Dorsolateral prefrontal cortex (tissue), 120 donors: ENCODE measurements at regions of chr15 and their contacts with region 1.

Region 1: DNA sequence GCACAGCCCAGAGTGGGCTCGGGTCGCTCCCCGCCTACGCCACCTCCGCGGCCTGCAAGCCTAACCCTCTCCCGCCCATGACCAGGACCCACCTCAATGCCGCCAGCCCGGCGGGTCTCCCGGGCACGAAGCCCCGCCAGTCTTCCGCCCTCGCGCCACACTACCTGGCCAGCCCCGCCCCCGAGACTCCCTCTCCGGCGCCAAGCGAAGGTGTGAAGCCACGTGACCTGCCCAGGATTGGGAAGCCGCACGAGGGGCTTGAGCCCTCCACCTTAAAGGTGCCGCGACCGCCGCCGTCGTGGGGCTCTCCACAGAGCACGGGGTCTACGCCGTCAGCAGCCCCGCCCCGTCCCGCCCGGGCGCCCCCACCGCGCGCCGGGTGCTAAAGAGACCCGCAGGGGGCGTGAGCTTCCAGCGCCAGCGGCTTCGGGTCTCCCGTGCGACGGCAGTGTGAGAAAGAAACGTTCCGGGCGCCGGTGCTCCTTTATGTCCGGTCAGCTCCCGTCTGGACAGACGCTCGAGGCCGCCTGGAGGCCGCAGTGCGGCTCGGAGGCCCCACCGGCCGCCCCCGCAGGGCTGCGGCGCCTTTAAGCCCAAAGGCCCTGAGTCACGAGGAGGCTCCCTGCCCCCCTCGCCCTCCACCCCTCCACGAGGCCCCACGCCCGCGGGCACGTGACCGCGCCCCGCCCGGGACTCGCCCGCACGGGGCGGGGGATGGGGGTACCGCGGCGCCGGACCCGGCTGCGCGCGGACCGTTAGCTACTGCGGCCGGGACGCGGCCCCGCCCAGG is at the start of gene CPEB1:
- DNase-seq: peak; percentile 24 to 84 (median 76)
- H3K4me3 ChIP-seq: peak within 1 kb of the TSS; percentile 42 to 88 (median 75)
- H3K27ac ChIP-seq: peak within 1 kb of the TSS; percentile 67 to 98 (median 92)
- H3K27me3 ChIP-seq: peaks cover 0 to 5% (median 0%) of the 10 kb centered on the region in 45 donors
- CTCF ChIP-seq: peak in 48 of 56 donors; percentile 9 to 62 (median 41)
- total RNA-seq, gene CPEB1: 36.0 to 80.0 (median 62.0) TPM

Region 2: GRCh38 chr15:82571722-82572222 is 75.5 kb before region 1 on chr15:
- intact Hi-C with region 1: loop called (anchors 2 to 5 kb)
- DNase-seq: peak; percentile 68 to 93 (median 88)
- H3K4me3 ChIP-seq: peak overlapping the region; percentile 38 to 78 (median 62)
- H3K27ac ChIP-seq: peak overlapping the region; percentile 67 to 95 (median 89)
- H3K27me3 ChIP-seq: no peaks in the 10 kb centered on the region
- CTCF ChIP-seq: peak in 10 of 56 donors; percentile 8 to 34 (median 18)

Region 3: DNA sequence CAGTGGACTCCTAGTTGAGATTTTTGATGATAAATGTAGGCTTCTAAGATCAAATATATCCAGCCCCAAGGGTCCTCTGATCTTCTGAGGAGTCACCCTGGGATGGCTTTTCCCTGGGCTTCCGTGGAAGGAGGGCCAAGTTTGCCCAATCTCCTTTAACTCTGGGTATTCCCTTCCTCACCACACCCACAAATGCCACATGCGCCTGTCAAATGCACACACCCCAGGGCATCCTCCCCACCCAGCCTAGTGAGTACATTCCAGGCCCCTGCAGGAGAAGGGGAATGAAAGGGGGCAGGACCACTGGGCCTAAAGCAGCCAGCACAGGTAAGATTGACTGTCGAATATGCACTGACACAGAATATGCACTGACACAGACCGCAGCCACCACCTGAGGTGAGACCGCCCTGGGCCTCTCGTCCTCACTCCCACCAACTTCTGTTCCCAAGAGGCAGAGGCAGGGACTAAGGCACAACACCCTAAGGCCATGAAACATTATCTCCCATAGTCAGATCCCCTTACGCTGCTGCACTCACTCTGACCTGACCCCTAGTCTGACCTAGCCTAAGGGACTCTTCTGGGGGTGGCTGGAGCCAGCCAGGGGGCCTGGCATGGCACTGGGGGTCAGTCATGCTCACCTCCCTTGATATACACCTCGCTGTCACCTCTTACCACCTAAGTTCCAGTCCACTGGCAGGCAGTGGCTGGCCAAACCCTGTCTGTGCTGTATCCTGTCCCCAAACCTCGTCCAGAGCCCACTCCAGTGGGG is 51.5 kb after region 1 on chr15:
- intact Hi-C with region 1: no loop called
- DNase-seq: no peak
- H3K4me3 ChIP-seq: no peak overlapping the region
- H3K27ac ChIP-seq: no peak overlapping the region
- H3K27me3 ChIP-seq: no peaks in the 10 kb centered on the region
- CTCF ChIP-seq: no peak

Region 4: DNA sequence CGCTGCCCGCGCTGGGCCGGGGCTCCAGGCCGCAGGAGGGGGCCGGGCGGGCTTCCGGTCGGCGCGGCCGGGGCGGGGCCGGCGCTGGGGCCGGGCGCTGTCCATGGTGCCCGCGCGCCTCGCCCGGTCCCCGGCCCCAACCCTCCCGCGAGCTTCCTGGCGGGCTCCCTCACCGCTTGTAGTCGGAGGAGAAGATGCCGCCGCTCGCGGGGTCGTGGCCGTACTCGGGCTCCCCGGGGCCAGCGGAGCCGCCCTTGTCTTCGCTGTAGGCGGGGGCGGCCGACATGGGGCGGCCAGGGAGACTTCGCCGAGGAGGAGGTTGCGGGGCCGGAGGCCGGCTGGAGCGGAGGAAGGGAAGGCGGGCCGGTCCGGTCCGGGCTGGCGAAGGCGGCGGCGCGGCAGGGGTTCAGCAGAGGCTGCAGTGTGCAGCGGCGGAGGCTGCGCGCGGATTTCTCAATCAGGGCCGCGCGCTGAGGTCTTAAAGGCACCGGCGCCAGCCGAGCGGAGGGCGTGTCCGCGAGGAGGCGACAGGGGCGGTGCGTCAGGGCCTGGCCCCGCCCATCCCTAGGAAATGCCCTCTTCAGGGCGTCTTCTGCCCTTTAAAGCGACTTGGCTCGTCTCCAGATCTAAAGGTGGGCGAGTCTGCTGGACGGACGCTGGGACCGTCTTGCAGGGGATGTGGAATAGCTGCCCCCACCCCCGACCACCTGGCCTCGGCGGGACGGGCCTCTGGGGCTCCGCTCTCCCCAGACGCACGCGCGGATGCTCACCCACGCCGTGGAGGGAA is 62.4 kb after region 1 on chr15 and contains the start of gene AP3B2:
- intact Hi-C with region 1: loop called in 1 of 2 experiments (anchors 5 kb)
- DNase-seq: peak; percentile 42 to 87 (median 76)
- H3K4me3 ChIP-seq: peak within 1 kb of the TSS; percentile 44 to 91 (median 80)
- H3K27ac ChIP-seq: peak within 1 kb of the TSS in 50 of 59 donors; percentile 6 to 86 (median 64)
- H3K27me3 ChIP-seq: no peaks in the 10 kb centered on the region
- CTCF ChIP-seq: peak in 3 of 56 donors; percentile 8 to 17 (median 9)
- total RNA-seq, gene AP3B2: 55.6 to 298 (median 178) TPM

Region 5: GRCh38 chr15:82749951-82750830 is 103.0 kb after region 1 on chr15:
- intact Hi-C with region 1: loop called in 1 of 2 experiments (anchors 2 kb)
- DNase-seq: peak; percentile 89 to 97 (median 94)
- H3K4me3 ChIP-seq: peak overlapping the region; percentile 57 to 99 (median 91)
- H3K27ac ChIP-seq: peak overlapping the region; percentile 63 to 98 (median 92)
- H3K27me3 ChIP-seq: no peaks in the 10 kb centered on the region
- CTCF ChIP-seq: peak in 28 of 56 donors; percentile 7 to 57 (median 26)

Region 6: GRCh38 chr15:82809404-82810060 is 162.3 kb after region 1 on chr15 and contains the start of gene WHAMM:
- intact Hi-C with region 1: loop called (anchors 5 kb)
- DNase-seq: peak; percentile 97 to 99 (median 98)
- H3K4me3 ChIP-seq: peak within 1 kb of the TSS; percentile 61 to 95 (median 86)
- H3K27ac ChIP-seq: peak within 1 kb of the TSS; percentile 90 to 100 (median 97)
- H3K27me3 ChIP-seq: no peaks in the 10 kb centered on the region
- CTCF ChIP-seq: peak in 29 of 56 donors; percentile 11 to 51 (median 27)
- total RNA-seq, gene WHAMM: 7.8 to 16.0 (median 11.1) TPM